ENCODE measurements at regions of chr12 and their contacts with region 1.

Region 1: DNA sequence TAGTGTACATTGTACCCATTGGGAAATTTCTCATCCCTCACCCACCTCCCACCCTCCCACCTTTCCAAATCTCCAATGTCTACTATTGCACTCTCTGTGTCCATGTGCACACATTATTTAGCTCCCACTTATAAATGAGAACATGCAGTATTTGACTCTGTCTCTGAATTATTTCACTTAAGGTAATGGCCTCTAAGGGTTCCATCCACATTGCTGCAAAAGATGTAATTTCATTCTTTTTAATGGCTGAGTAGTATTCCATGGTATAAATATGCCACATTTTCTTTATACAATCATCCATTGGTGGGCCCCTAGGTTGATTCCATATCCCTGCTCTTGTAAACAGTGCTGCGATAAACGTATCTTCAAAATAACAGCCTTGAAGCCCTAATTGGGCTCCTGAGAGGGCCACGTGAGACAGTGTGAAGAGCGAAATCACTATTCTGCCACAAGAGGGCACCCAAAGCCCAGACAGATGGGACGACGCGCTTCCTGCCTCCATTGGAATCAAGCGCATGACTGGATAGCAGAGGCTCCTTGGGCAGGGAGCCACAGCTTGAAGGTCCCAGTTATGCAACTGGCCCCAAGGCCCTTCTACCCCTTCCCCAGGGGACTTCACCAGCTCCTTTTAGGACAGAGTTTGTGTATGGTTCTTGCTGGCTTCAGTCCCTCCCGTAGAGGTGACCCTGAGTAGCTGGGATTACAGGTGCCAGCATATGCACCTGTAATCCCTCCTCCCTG is 21.3 kb upstream of the CD27 start:
- DNase-seq: peak; percentile 47 to 88 (median 80)
- ATAC-seq: peak; percentile 90
- H3K4me3 ChIP-seq: no peak overlapping the region
- H3K4me3 Mint-ChIP-seq: peak overlapping the region in 7 of 10 donors; percentile 10 to 69 (median 27)
- H3K27ac ChIP-seq: peak overlapping the region; percentile 56
- H3K27ac Mint-ChIP-seq: peak overlapping the region; percentile 66 to 97 (median 86)
- H3K4me1 ChIP-seq: peaks cover 30 to 31% of the 10 kb centered on the region in 2 donors
- H3K4me1 Mint-ChIP-seq: peaks cover 18 to 46% (median 38%) of the 10 kb centered on the region in 7 donors
- H3K27me3 ChIP-seq: no peaks in the 10 kb centered on the region
- H3K27me3 Mint-ChIP-seq: no peaks in the 10 kb centered on the region

Region 2: DNA sequence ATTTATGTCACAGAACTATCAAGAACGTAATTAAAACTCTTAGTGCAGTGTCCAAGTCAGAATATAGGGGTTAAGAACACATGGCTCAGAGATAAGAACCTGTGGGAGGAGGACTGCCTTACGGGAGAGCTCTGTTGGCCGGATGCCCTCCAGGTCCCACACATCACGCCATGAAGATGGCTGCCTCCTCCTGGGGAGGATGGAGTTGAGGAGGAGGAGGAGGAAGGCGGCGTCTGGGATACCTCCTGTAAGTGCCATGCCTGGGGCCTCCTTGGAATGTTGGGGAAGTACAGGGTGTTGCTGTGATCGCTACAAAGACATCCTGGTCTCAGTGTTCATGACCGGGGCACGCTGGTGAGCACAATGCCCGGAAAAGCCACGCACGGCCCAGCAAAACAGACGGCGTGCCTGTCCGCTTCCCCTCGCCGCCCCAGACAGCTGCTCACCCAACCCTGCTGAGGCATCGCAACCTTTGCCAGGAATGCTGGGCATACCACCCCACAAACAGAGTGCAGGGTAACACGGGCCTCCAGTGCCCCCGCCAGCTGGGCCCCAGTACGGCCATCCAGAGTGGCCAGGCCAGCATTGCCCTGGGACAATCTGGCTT is 251.9 kb before region 1 on chr12:
- CTCF ChIA-PET with region 1: no interaction called
- POLR2A ChIA-PET with region 1: no interaction called
- intact Hi-C with region 1: no loop called
- DNase-seq: no peak
- ATAC-seq: no peak
- H3K4me3 ChIP-seq: no peak overlapping the region
- H3K4me3 Mint-ChIP-seq: no peak overlapping the region
- H3K27ac ChIP-seq: no peak overlapping the region
- H3K27ac Mint-ChIP-seq: no peak overlapping the region
- H3K4me1 ChIP-seq: peaks cover 0 to 25% of the 10 kb centered on the region in 2 donors
- H3K4me1 Mint-ChIP-seq: peaks cover 22 to 36% (median 33%) of the 10 kb centered on the region in 7 donors
- H3K27me3 ChIP-seq: no peaks in the 10 kb centered on the region
- H3K27me3 Mint-ChIP-seq: peaks cover 0 to 10% (median 0%) of the 10 kb centered on the region in 5 donors

Region 3: GRCh38 chr12:6323340-6323994 is 100.0 kb before region 1 on chr12:
- CTCF ChIA-PET with region 1: interaction called, 6 read pairs
- POLR2A ChIA-PET with region 1: interaction called, 3 read pairs
- intact Hi-C with region 1: loop called in 1 of 2 experiments (anchors 1 kb)
- DNase-seq: peak in 5 of 9 donors; percentile 49 to 59 (median 52)
- ATAC-seq: peak; percentile 90
- H3K4me3 ChIP-seq: peak overlapping the region; percentile 45
- H3K4me3 Mint-ChIP-seq: peak overlapping the region; percentile 63 to 90 (median 82)
- H3K27ac ChIP-seq: peak overlapping the region; percentile 35
- H3K27ac Mint-ChIP-seq: peak overlapping the region; percentile 68 to 95 (median 89)
- H3K4me1 ChIP-seq: peaks cover 27 to 38% of the 10 kb centered on the region in 2 donors
- H3K4me1 Mint-ChIP-seq: peaks cover 37 to 74% (median 53%) of the 10 kb centered on the region in 7 donors
- H3K27me3 ChIP-seq: no peaks in the 10 kb centered on the region
- H3K27me3 Mint-ChIP-seq: peaks cover 0 to 6% (median 0%) of the 10 kb centered on the region in 5 donors

Region 4: GRCh38 chr12:6367065-6367968 is 56.1 kb before region 1 on chr12:
- CTCF ChIA-PET with region 1: interaction called, 3 read pairs
- POLR2A ChIA-PET with region 1: interaction called, 5 read pairs
- intact Hi-C with region 1: loop called in 1 of 2 experiments (anchors 2 kb)
- DNase-seq: peak in 5 of 9 donors; percentile 27 to 57 (median 53)
- ATAC-seq: peak; percentile 70
- H3K4me3 ChIP-seq: no peak overlapping the region
- H3K4me3 Mint-ChIP-seq: peak overlapping the region in 2 of 10 donors; percentile 12 to 19
- H3K27ac ChIP-seq: no peak overlapping the region
- H3K27ac Mint-ChIP-seq: peak overlapping the region in 8 of 9 donors; percentile 14 to 91 (median 70)
- H3K4me1 ChIP-seq: peaks cover 0 to 4% of the 10 kb centered on the region in 2 donors
- H3K4me1 Mint-ChIP-seq: peaks cover 18 to 38% (median 35%) of the 10 kb centered on the region in 7 donors
- H3K27me3 ChIP-seq: no peaks in the 10 kb centered on the region
- H3K27me3 Mint-ChIP-seq: no peaks in the 10 kb centered on the region

Region 5: GRCh38 chr12:6443361-6443983 is 20.0 kb after region 1 on chr12:
- CTCF ChIA-PET with region 1: interaction called, 51 read pairs
- POLR2A ChIA-PET with region 1: interaction called, 156 read pairs
- intact Hi-C with region 1: loop called (anchors 1 kb)
- DNase-seq: no peak
- ATAC-seq: no peak
- H3K4me3 ChIP-seq: peak overlapping the region; percentile 19
- H3K4me3 Mint-ChIP-seq: peak overlapping the region; percentile 95 to 100 (median 100)
- H3K27ac ChIP-seq: peak overlapping the region; percentile 87
- H3K27ac Mint-ChIP-seq: peak overlapping the region; percentile 92 to 100 (median 95)
- H3K4me1 ChIP-seq: peaks cover 25 to 32% of the 10 kb centered on the region in 2 donors
- H3K4me1 Mint-ChIP-seq: peaks cover 22 to 63% (median 53%) of the 10 kb centered on the region in 7 donors
- H3K27me3 ChIP-seq: no peaks in the 10 kb centered on the region
- H3K27me3 Mint-ChIP-seq: no peaks in the 10 kb centered on the region

Region 6: DNA sequence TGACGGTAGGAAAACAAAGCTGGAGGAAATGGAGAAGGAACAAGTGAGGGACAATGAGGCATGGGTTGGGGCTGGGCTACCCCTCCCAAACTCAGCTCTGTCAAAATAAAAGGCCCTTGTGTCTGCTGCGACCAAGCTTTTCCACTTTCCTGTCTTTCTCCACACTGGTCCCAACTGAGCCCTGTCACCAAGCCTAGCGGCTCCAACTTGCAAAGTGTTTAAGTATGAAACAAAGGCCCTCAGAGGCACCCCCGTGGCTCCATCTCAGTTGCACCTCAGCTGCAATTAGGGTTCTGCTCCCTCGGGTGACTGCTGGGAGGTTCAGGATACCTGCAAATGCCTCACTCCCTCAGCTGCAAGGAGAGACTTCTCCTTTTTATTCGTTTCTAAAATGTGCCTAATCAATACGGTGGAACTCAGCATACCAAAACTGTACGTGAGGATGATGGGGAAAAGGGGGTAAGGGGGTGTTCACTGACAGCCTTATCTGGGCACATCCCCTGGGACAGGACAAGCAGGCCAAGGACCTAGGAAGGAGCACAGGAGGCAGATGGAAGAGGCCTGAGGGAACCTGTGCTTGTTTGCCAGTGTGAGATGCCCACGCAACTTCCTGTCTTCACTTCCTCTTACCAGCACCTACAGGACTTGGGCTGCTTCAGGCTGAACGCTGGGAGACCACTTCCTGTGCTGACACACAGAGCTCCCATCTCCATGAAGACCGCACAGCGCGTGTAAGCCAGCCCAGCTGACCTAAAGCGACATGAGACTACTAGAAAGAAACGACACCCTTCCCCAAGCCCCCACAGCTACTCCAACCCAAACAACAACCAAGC is 38.2 kb after region 1 on chr12:
- CTCF ChIA-PET with region 1: interaction called, 201 read pairs
- POLR2A ChIA-PET with region 1: interaction called, 237 read pairs
- intact Hi-C with region 1: loop called (anchors 1 kb)
- DNase-seq: peak; percentile 41 to 91 (median 87)
- ATAC-seq: peak; percentile 93
- H3K4me3 ChIP-seq: peak overlapping the region; percentile 54
- H3K4me3 Mint-ChIP-seq: peak overlapping the region; percentile 74 to 89 (median 85)
- H3K27ac ChIP-seq: peak overlapping the region; percentile 93
- H3K27ac Mint-ChIP-seq: peak overlapping the region; percentile 95 to 99 (median 98)
- H3K4me1 ChIP-seq: peaks cover 59 to 81% of the 10 kb centered on the region in 2 donors
- H3K4me1 Mint-ChIP-seq: peaks cover 66 to 95% (median 87%) of the 10 kb centered on the region in 7 donors
- H3K27me3 ChIP-seq: no peaks in the 10 kb centered on the region
- H3K27me3 Mint-ChIP-seq: no peaks in the 10 kb centered on the region

Region 7: DNA sequence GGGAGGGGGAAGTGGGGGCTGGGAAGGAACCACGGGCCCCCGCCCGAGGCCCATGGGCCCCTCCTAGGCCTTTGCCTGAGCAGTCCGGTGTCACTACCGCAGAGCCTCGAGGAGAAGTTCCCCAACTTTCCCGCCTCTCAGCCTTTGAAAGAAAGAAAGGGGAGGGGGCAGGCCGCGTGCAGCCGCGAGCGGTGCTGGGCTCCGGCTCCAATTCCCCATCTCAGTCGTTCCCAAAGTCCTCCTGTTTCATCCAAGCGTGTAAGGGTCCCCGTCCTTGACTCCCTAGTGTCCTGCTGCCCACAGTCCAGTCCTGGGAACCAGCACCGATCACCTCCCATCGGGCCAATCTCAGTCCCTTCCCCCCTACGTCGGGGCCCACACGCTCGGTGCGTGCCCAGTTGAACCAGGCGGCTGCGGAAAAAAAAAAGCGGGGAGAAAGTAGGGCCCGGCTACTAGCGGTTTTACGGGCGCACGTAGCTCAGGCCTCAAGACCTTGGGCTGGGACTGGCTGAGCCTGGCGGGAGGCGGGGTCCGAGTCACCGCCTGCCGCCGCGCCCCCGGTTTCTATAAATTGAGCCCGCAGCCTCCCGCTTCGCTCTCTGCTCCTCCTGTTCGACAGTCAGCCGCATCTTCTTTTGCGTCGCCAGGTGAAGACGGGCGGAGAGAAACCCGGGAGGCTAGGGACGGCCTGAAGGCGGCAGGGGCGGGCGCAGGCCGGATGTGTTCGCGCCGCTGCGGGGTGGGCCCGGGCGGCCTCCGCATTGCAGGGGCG is 110.7 kb after region 1 on chr12 and contains the start of gene GAPDH:
- CTCF ChIA-PET with region 1: interaction called, 106 read pairs
- POLR2A ChIA-PET with region 1: interaction called, 104 read pairs
- intact Hi-C with region 1: loop called (anchors 1 kb)
- DNase-seq: peak; percentile 66 to 94 (median 83)
- ATAC-seq: peak; percentile 66
- H3K4me3 ChIP-seq: peak within 1 kb of the TSS; percentile 97
- H3K4me3 Mint-ChIP-seq: peak within 1 kb of the TSS; percentile 90 to 99 (median 94)
- H3K27ac ChIP-seq: peak within 1 kb of the TSS; percentile 81
- H3K27ac Mint-ChIP-seq: peak within 1 kb of the TSS; percentile 92 to 100 (median 94)
- H3K4me1 ChIP-seq: peaks cover 31 to 43% of the 10 kb centered on the region in 2 donors
- H3K4me1 Mint-ChIP-seq: peaks cover 28 to 59% (median 42%) of the 10 kb centered on the region in 7 donors
- H3K27me3 ChIP-seq: no peaks in the 10 kb centered on the region
- H3K27me3 Mint-ChIP-seq: peaks cover 0 to 2% (median 0%) of the 10 kb centered on the region in 5 donors
- total RNA-seq, gene GAPDH: 330 to 4,503 (median 379) TPM

Region 8: DNA sequence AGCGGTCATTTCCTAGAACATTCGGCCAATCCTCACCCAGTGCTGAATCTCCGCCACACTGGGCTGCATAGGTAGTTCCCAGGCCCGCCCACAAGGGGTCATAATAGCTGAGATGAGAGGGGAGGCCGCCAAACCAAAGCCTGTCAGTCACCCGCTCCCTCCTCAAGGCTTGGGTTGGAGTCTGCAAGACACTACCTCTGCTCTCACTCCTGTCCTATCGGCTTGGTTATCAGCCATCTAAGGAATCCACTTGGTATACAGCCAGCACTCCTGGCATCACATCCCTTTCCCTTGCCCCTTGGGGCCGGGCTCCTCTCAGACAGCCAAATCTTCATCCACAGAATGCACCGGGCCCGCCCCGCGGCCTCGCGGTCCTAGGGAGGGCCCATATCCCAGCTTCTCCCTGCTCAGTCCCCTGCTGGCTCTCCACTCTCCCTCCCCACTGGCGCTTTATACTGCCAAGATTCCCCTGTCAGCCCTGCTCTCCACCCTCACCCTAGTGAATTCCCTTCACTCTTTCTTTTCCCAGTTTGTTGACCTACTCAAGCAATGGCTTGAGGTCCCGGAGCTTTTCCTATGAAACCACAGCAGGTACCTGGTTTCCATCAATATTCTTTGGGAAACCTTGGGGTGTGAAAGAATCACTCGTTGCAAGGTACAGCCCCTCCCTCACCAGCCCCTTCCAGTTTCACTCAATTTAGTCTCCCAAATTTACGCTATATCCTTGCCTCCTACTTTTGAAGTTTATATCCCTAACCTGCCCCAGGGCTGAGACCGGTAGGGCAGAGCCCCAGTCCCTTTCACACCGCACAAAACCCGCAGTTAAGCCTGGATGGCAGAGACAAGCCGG is 131.0 kb after region 1 on chr12:
- CTCF ChIA-PET with region 1: interaction called, 3 read pairs
- POLR2A ChIA-PET with region 1: no interaction called
- intact Hi-C with region 1: loop called (anchors 1 kb)
- DNase-seq: peak; percentile 38 to 57 (median 52)
- ATAC-seq: peak; percentile 67
- H3K4me3 ChIP-seq: peak overlapping the region; percentile 92
- H3K4me3 Mint-ChIP-seq: peak overlapping the region; percentile 80 to 96 (median 90)
- H3K27ac ChIP-seq: peak overlapping the region; percentile 71
- H3K27ac Mint-ChIP-seq: peak overlapping the region; percentile 14 to 88 (median 55)
- H3K4me1 ChIP-seq: peaks cover 26 to 29% of the 10 kb centered on the region in 2 donors
- H3K4me1 Mint-ChIP-seq: peaks cover 39 to 62% (median 56%) of the 10 kb centered on the region in 7 donors
- H3K27me3 ChIP-seq: no peaks in the 10 kb centered on the region
- H3K27me3 Mint-ChIP-seq: no peaks in the 10 kb centered on the region

Measured in naive thymus-derived CD4-positive, alpha-beta T cell (primary cell).